Activated CD4-positive, alpha-beta T cell treated with anti-CD3 and anti-CD28 coated beads for 36 hours (primary cell): ENCODE measurements at regions of chr5 and their contacts with region 1.

Region 1: GRCh38 chr5:34486160-34486848 is 169.8 kb upstream of the RAI14 start:
- DNase-seq: peak; percentile 86
- ATAC-seq: peak; percentile 58
- H3K4me3 Mint-ChIP-seq: no peak overlapping the region
- H3K27ac Mint-ChIP-seq: no peak overlapping the region
- H3K4me1 Mint-ChIP-seq: peaks cover 8% of the 10 kb centered on the region
- H3K27me3 Mint-ChIP-seq: peaks cover 38% of the 10 kb centered on the region

Region 2: DNA sequence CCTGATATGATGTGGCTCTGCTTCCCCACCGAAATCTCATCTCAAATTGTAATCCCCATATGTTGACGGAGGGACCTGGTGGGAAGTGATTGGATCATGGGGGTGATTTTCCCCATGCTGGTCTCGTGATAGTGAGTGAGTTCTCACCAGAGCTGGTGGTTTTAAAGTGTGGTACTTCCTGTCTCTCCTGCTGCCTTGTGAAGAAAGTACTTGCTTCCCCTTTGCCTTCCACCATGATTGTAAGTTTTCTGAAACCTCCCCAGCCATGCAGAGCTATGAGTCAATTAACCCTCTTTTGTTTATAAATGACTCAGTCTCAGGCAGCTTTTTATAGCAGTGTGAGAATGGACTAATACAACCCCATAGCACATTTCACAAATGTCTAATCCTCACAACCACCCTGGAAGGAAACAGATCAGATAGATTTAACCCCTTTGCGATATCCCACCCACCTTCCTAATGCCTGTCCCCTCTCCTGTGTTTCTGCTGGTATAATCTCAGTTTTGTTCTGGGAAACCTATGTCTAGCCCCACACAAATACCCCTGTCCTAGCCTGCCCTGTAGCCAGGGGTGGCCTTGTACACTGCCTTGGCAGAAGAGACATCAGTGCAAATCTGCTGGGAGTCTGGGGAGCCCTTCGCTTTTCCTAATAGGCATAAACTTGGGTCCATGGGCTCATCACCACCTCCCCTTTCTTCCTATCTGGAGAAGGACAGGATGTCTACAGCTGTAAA is 12.9 kb after region 1 on chr5:
- CTCF ChIA-PET with region 1: interaction called, 11 read pairs
- POLR2A ChIA-PET with region 1: no interaction called
- intact Hi-C with region 1: loop called in 1 of 2 experiments (anchors 1 kb)
- DNase-seq: peak; percentile 40
- ATAC-seq: peak; percentile 96
- H3K4me3 Mint-ChIP-seq: no peak overlapping the region
- H3K27ac Mint-ChIP-seq: peak overlapping the region; percentile 61
- H3K4me1 Mint-ChIP-seq: peaks cover 12% of the 10 kb centered on the region
- H3K27me3 Mint-ChIP-seq: peaks cover 21% of the 10 kb centered on the region

Region 3: GRCh38 chr5:34533582-34534522 is 47.5 kb after region 1 on chr5:
- CTCF ChIA-PET with region 1: interaction called, 10 read pairs
- POLR2A ChIA-PET with region 1: interaction called, 3 read pairs
- intact Hi-C with region 1: loop called (anchors 1 to 2 kb)
- DNase-seq: peak; percentile 56
- ATAC-seq: peak; percentile 77
- H3K4me3 Mint-ChIP-seq: no peak overlapping the region
- H3K27ac Mint-ChIP-seq: peak overlapping the region; percentile 76
- H3K4me1 Mint-ChIP-seq: peaks cover 41% of the 10 kb centered on the region
- H3K27me3 Mint-ChIP-seq: peaks cover 5% of the 10 kb centered on the region

Region 4: GRCh38 chr5:34898258-34898895 is 412.1 kb after region 1 on chr5:
- CTCF ChIA-PET with region 1: interaction called, 18 read pairs
- POLR2A ChIA-PET with region 1: no interaction called
- intact Hi-C with region 1: loop called (anchors 1 kb)
- DNase-seq: peak; percentile 77
- ATAC-seq: peak; percentile 86
- H3K4me3 Mint-ChIP-seq: no peak overlapping the region
- H3K27ac Mint-ChIP-seq: no peak overlapping the region
- H3K4me1 Mint-ChIP-seq: no peaks in the 10 kb centered on the region
- H3K27me3 Mint-ChIP-seq: no peaks in the 10 kb centered on the region